ENCODE measurements at regions of chr5 and their contacts with region 1.

Region 1: DNA sequence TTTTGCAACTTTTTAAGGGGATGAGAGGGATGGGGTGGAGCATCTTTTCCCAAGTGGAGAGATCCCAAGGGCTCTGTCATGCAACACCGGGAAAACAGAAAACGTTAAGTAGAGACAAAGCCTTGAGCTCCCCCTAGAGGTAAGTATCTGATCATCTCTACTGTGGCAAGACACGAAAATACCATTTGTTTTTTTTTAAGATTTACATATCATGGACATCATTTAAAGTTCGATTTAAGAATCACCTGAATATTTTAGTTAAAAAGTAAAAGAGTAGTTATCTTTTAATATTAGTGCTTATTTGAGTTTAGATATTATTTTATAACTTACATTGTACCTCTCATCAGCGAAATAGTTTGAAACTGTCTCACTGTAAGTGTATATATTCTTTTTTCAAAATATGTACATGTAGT is 200.4 kb downstream of the LRRC70 start:
- DNase-seq: no peak
- ATAC-seq: peak; percentile 87
- H3K4me3 ChIP-seq: no peak overlapping the region
- H3K27ac ChIP-seq: no peak overlapping the region
- H3K4me1 ChIP-seq: no peaks in the 10 kb centered on the region; the same call in 1 of the 2 replicates
- H3K27me3 ChIP-seq: no peaks in the 10 kb centered on the region
- CTCF ChIP-seq: peak; percentile 66 to 70 (median 66)
- EP300 ChIP-seq: no peak
- POLR2A ChIP-seq: no peak
- RAD21 ChIP-seq: peak; percentile 79

Region 2: GRCh38 chr5:62206150-62206829 is 572.7 kb before region 1 on chr5:
- CTCF ChIA-PET with region 1: no interaction called
- POLR2A ChIA-PET with region 1: no interaction called
- RAD21 ChIA-PET with region 1: no interaction called
- SMC1A ChIA-PET with region 1: no interaction called
- in situ Hi-C with region 1: loop called (anchors 25 kb)
- intact Hi-C with region 1: no loop called
- DNase-seq: no peak
- ATAC-seq: peak; percentile 14; the same call in 1 of the 3 replicates
- H3K4me3 ChIP-seq: no peak overlapping the region
- H3K27ac ChIP-seq: no peak overlapping the region
- H3K4me1 ChIP-seq: no peaks in the 10 kb centered on the region
- H3K27me3 ChIP-seq: peaks cover 0 to 1% of the 10 kb centered on the region in 2 experiments; a peak in 1 of 4 replicates
- CTCF ChIP-seq: no peak
- EP300 ChIP-seq: no peak
- POLR2A ChIP-seq: no peak
- RAD21 ChIP-seq: no peak

Region 3: DNA sequence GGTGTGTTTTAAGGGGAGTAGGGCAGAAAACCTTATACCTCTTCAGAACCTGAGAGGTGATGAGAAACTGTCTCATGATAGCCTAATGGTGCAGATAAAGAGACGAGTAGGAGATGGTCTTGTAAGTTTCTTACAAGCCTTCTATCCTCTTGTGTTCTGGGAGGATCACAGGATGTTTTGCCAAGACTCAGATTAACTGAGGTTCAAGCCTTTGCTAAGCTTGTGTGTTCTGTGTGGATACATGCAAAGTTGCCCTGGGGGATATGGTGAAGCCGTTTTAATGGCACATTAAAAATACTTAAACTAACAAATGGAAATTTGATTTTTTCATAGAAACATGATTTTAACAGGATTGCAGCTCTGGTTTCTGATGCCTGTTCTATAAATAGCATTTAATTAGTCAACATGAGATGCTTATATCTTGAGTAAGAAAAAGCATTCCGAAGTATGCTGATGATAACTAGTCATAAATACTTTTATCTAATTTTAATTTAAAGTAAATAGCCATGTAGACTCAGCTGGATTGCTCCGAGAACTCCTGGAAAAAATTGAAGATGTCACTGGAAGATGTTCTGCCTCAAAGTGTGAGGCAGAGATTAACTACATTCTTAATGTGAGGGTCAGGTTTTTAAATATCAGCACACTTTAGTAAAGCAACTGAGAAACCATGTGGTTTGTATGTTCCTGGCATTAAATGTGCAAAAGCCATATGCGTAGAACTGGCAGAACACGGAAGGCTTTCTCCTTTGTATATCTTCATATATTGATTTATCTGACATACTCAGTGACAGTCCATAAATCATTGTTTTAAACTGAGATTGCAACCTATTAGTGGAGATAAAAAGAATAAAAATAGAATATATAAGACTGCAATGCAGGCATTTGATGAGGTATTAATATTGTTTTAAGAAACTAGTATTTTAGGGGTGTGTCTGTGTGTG is 312.8 kb before region 1 on chr5:
- CTCF ChIA-PET with region 1: interaction called, 78 read pairs
- POLR2A ChIA-PET with region 1: no interaction called
- RAD21 ChIA-PET with region 1: interaction called, 7 read pairs
- SMC1A ChIA-PET with region 1: interaction called, 46 read pairs
- in situ Hi-C with region 1: no loop called
- intact Hi-C with region 1: no loop called
- DNase-seq: no peak
- ATAC-seq: no peak
- H3K4me3 ChIP-seq: no peak overlapping the region
- H3K27ac ChIP-seq: no peak overlapping the region
- H3K4me1 ChIP-seq: no peaks in the 10 kb centered on the region
- H3K27me3 ChIP-seq: no peaks in the 10 kb centered on the region
- CTCF ChIP-seq: no peak
- EP300 ChIP-seq: no peak
- POLR2A ChIP-seq: no peak
- RAD21 ChIP-seq: no peak

Region 4: DNA sequence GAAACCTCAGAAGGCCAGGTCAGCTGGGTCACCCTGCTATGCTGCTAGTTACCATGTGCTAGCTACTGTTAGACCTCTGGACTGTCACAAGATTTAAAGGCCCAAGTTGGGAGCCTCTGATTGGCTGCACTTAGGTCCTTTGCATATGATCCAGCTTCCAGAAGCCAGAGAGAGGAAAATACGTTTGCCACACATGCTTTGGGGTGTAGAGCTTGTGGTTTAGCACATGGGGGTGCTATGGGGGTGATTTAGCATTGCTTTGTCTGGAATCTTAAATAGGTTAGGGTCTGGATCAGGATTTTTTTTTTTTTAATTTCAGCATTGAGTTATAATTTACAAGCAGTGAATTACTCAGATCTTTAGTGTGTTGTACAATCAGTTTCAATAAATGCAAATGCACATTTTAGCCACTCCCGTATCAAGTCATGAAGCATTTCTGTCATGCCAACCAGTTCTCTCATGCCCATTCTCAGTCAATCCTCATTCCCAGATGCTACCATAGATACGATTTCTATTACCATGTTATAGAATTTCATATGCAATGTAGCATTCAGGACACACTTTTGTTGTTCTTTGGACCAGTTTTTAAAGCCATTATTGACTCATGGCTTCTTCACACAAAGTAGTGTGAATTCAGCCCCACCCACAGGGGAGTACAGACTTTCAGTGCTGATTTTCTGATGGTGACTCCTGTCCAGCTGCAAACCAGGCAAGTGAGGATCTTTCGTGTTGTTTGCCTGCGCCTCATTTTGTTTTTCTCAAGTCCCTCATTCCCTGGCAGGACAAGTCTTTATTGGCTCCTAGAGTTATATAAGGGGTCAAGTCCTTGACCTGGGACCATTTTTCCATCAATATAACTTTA is 50.0 kb after region 1 on chr5:
- CTCF ChIA-PET with region 1: no interaction called
- POLR2A ChIA-PET with region 1: no interaction called
- RAD21 ChIA-PET with region 1: no interaction called
- SMC1A ChIA-PET with region 1: no interaction called
- in situ Hi-C with region 1: no loop called
- intact Hi-C with region 1: no loop called
- DNase-seq: no peak
- ATAC-seq: no peak
- H3K4me3 ChIP-seq: no peak overlapping the region
- H3K27ac ChIP-seq: no peak overlapping the region
- H3K4me1 ChIP-seq: no peaks in the 10 kb centered on the region
- H3K27me3 ChIP-seq: no peaks in the 10 kb centered on the region
- CTCF ChIP-seq: no peak
- EP300 ChIP-seq: no peak
- POLR2A ChIP-seq: no peak
- RAD21 ChIP-seq: no peak